ENCODE measurements at regions of chr2 and their contacts with region 1.

Region 1: GRCh38 chr2:65064728-65065552 is 8.7 kb downstream of the CEP68 start:
- DNase-seq: peak; percentile 86
- H3K4me3 ChIP-seq: peak overlapping the region in 2 of 8 donors; percentile 2 to 46
- H3K27ac ChIP-seq: peak overlapping the region; percentile 27 to 91 (median 82)
- H3K4me1 ChIP-seq: peaks cover 23 to 100% (median 62%) of the 10 kb centered on the region in 6 donors
- H3K27me3 ChIP-seq: no peaks in the 10 kb centered on the region
- CTCF ChIP-seq: peak; percentile 44 to 94 (median 79)
- POLR2A ChIP-seq: no peak

Region 2: GRCh38 chr2:65129826-65130663 is 65.1 kb after region 1 on chr2 and contains the start of gene RAB1A:
- intact Hi-C with region 1: loop called (anchors 10 kb)
- DNase-seq: peak; percentile 100
- H3K4me3 ChIP-seq: peak within 1 kb of the TSS; percentile 66 to 94 (median 80)
- H3K27ac ChIP-seq: peak within 1 kb of the TSS; percentile 92 to 99 (median 97)
- H3K4me1 ChIP-seq: peaks cover 37 to 50% (median 48%) of the 10 kb centered on the region in 6 donors
- H3K27me3 ChIP-seq: no peaks in the 10 kb centered on the region
- CTCF ChIP-seq: peak; percentile 12 to 79 (median 62)
- POLR2A ChIP-seq: peak; percentile 44 to 85 (median 74)
- total RNA-seq, gene RAB1A: 83.9 to 101 (median 92.0) TPM

Measured in spleen (tissue), 13 donors.